Activated CD4-positive, alpha-beta memory T cell treated with anti-CD3 and anti-CD28 coated beads, Interleukin-2, amount 10 ng/mL, durations not matched to agents 7 days and 5 days (primary cell): ENCODE measurements at regions of chr14 and their contacts with region 1.

Region 1: GRCh38 chr14:51846631-51847488 is 13.6 kb upstream of the GNG2 start:
- DNase-seq: peak; percentile 91
- H3K4me3 Mint-ChIP-seq: peak overlapping the region; percentile 75
- H3K27ac Mint-ChIP-seq: peak overlapping the region; percentile 98
- H3K4me1 Mint-ChIP-seq: peaks cover 74% of the 10 kb centered on the region
- H3K27me3 Mint-ChIP-seq: no peaks in the 10 kb centered on the region

Region 2: DNA sequence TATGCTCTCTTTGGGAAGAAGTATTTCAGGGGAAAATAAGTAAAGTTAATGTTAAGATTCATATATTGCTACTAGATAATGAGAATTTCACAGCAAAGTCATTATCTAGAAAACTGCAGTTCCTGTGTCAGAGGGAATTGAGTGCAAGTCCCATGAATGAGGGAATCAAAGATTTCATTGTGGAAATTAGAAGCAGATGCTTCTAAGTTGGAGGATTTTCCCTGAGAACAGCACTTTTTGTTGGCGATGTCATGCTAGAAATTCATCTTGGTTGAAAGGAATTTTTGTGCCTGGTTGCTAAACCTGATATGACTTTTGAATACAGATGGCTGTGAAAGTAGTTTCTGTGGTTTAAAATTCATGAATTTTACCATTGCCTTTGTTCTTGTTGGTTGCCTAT is 169.6 kb before region 1 on chr14:
- CTCF ChIA-PET with region 1: no interaction called
- POLR2A ChIA-PET with region 1: no interaction called
- DNase-seq: no peak
- H3K4me3 Mint-ChIP-seq: no peak overlapping the region
- H3K27ac Mint-ChIP-seq: no peak overlapping the region
- H3K4me1 Mint-ChIP-seq: peaks cover 11% of the 10 kb centered on the region
- H3K27me3 Mint-ChIP-seq: peaks cover 10% of the 10 kb centered on the region

Region 3: GRCh38 chr14:51828017-51828797 is 18.7 kb before region 1 on chr14:
- CTCF ChIA-PET with region 1: interaction called, 4 read pairs
- POLR2A ChIA-PET with region 1: interaction called, 32 read pairs
- DNase-seq: peak; percentile 82
- H3K4me3 Mint-ChIP-seq: no peak overlapping the region
- H3K27ac Mint-ChIP-seq: no peak overlapping the region
- H3K4me1 Mint-ChIP-seq: no peaks in the 10 kb centered on the region
- H3K27me3 Mint-ChIP-seq: peaks cover 3% of the 10 kb centered on the region

Region 4: GRCh38 chr14:51873221-51873893 is 26.5 kb after region 1 on chr14:
- CTCF ChIA-PET with region 1: interaction called, 5 read pairs
- POLR2A ChIA-PET with region 1: interaction called, 407 read pairs
- DNase-seq: peak; percentile 43
- H3K4me3 Mint-ChIP-seq: no peak overlapping the region
- H3K27ac Mint-ChIP-seq: peak overlapping the region; percentile 60
- H3K4me1 Mint-ChIP-seq: peaks cover 58% of the 10 kb centered on the region
- H3K27me3 Mint-ChIP-seq: no peaks in the 10 kb centered on the region

Region 5: GRCh38 chr14:51884086-51884927 is 37.4 kb after region 1 on chr14:
- CTCF ChIA-PET with region 1: no interaction called
- POLR2A ChIA-PET with region 1: interaction called, 16 read pairs
- DNase-seq: no peak
- H3K4me3 Mint-ChIP-seq: no peak overlapping the region
- H3K27ac Mint-ChIP-seq: peak overlapping the region; percentile 61
- H3K4me1 Mint-ChIP-seq: peaks cover 61% of the 10 kb centered on the region
- H3K27me3 Mint-ChIP-seq: no peaks in the 10 kb centered on the region